ENCODE measurements at regions of chr7 and their contacts with region 1.

Region 1: DNA sequence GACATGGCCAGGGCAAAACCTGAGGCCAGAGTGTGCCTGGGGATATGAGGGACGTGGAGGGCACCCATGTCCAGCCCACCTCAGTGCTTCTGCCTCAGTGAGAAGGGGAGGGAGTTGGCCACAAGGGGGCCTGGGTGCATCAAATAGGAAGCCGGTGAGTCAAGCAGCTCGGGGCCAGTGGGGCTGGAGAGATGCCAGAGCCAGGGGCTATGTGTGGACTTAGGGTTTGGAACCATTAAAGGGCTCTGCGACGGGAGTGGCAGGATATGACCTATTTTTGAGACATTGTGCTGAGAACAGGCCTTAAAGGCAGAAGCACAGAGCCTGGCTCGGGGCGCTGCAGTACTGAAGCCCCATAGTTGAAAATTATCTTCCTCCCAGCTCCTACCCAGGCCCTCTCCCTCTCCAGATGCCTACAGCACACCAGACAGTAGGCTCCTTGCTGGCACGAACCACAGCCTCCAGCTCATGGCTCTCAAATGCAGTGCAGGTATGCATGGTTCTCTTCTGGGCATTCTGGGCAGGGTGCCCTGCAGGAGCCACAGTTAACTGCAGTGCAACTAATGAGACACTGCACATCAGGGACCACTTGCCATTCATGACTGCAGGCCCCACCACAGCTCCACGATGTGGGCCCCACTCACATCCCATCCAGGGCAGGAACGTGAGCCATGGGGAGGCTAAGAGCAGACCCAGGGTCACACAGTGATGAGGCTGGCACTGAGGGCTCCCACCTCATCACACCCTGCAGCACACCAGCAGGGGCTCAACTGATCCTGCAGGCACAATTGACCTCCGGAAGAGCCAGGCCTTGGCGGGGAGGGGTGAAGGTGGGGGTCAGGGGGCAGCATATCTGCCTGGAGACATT is 7.2 kb upstream of the PGAM2 start:
- DNase-seq: peak; percentile 98
- ATAC-seq: peak; percentile 53
- H3K4me3 ChIP-seq: peak overlapping the region; percentile 67
- H3K27ac ChIP-seq: peak overlapping the region; percentile 99
- H3K4me1 ChIP-seq: peaks cover 49% of the 10 kb centered on the region
- H3K27me3 ChIP-seq: no peaks in the 10 kb centered on the region
- CTCF ChIP-seq: peak; percentile 84

Region 2: DNA sequence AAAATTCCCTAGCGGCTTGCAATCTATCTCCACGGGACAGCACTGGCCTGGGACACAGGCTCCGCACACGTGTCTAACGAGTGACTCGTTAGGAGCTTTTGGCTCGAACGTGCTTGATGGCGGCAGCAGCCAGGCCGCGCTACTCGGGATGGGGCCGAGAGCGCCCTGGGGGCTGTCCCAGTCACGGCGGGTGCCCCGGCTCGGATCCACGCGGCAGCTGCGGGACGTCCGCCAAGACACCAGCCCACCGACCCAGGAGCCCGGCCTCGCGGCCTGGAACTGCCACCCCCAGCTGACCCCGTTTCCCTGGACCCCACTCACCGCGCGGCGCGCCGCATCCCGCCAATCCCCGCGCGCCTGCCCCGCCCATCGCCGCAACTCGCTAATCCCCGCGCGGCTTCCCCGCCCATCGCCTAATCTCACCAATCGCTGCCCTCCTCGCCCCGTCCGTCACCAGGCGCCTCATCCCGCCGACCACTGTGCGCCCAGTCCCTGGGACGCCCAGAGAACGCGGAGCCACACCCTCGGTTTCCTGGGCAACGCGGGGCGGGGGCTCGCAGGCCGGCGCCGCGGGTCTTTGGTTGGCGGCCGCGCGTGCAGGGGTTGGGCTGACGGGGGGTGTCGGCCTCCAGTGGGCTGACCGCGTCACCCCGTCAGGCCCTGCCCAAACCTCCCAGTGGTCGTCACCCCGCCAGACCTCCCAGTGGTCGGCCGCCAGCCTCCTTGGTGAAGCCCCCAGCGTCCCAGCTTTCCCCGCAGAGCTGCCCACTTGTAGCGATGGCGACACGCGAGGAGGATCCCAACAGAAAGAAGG is 50.8 kb after region 1 on chr7 and contains the start of gene POLD2:
- CTCF ChIA-PET with region 1: no interaction called
- POLR2A ChIA-PET with region 1: no interaction called
- intact Hi-C with region 1: loop called (anchors 1 kb)
- DNase-seq: peak; percentile 96
- ATAC-seq: peak; percentile 99
- H3K4me3 ChIP-seq: peak within 1 kb of the TSS; percentile 81
- H3K27ac ChIP-seq: peak within 1 kb of the TSS; percentile 49
- H3K4me1 ChIP-seq: peaks cover 20% of the 10 kb centered on the region
- H3K27me3 ChIP-seq: no peaks in the 10 kb centered on the region
- CTCF ChIP-seq: no peak
- total RNA-seq, gene POLD2: 224 and 225 TPM in 2 replicates

Region 3: GRCh38 chr7:44196450-44196872 is 123.9 kb after region 1 on chr7:
- CTCF ChIA-PET with region 1: interaction called, 4 read pairs
- POLR2A ChIA-PET with region 1: no interaction called
- intact Hi-C with region 1: loop called (anchors 1 kb)
- DNase-seq: peak; percentile 66
- ATAC-seq: peak; percentile 41
- H3K4me3 ChIP-seq: no peak overlapping the region
- H3K27ac ChIP-seq: no peak overlapping the region
- H3K4me1 ChIP-seq: peaks cover 8% of the 10 kb centered on the region
- H3K27me3 ChIP-seq: no peaks in the 10 kb centered on the region
- CTCF ChIP-seq: peak; percentile 81

Measured in PC-3 (cell line).